Mammary epithelial cell (primary cell): ENCODE measurements at regions of chr18 and their contacts with region 1.

Region 1: GRCh38 chr18:35240664-35241447 is at the start of gene ZNF397:
- DNase-seq: peak; percentile 93
- H3K4me3 ChIP-seq: peak within 1 kb of the TSS; percentile 67 to 94 (median 90)
- H3K27ac ChIP-seq: peak within 1 kb of the TSS; percentile 85
- H3K4me1 ChIP-seq: no peaks in the 10 kb centered on the region
- H3K27me3 ChIP-seq: no peaks in the 10 kb centered on the region
- CTCF ChIP-seq: no peak
- total RNA-seq, gene ZNF397: 13.3 to 15.5 TPM

Region 2: DNA sequence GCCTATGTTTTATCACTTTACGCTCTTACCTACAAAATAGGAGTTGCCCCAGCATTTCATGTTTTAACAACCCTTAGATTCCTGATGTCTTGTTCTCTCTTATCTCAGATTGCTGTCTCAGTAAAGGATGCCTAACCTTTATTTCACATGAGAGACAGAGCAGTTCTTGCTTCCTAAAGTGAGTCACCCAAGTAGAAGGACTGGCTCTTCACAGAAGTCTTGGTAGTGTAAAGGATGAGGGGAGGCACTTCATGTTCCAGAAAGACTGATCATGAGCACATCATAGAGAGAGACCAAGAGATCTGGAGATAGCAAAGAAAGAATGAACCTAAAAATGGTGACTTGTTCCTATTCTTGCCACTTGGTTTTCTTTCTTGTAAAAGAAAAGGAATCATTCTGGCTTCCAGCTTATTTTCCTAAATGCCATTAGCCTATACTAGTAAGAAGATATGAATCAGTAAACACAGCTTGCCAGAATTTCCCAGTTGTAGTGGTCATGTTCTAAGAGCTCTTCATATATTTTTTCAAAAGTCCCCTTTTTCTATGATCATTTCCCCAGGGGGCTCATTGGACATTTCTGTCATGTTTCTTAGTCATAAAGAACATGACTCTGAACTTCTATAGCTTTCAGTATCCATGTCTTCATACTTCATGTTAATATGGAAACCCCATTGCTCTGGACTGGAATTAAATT is 144.7 kb before region 1 on chr18:
- CTCF ChIA-PET with region 1: no interaction called
- dilution Hi-C with region 1: no loop called
- in situ Hi-C with region 1: no loop called
- intact Hi-C with region 1: no loop called
- DNase-seq: peak; percentile 21
- H3K4me3 ChIP-seq: no peak overlapping the region
- H3K27ac ChIP-seq: no peak overlapping the region
- H3K4me1 ChIP-seq: peaks cover 3% of the 10 kb centered on the region
- H3K27me3 ChIP-seq: no peaks in the 10 kb centered on the region
- CTCF ChIP-seq: no peak

Region 3: DNA sequence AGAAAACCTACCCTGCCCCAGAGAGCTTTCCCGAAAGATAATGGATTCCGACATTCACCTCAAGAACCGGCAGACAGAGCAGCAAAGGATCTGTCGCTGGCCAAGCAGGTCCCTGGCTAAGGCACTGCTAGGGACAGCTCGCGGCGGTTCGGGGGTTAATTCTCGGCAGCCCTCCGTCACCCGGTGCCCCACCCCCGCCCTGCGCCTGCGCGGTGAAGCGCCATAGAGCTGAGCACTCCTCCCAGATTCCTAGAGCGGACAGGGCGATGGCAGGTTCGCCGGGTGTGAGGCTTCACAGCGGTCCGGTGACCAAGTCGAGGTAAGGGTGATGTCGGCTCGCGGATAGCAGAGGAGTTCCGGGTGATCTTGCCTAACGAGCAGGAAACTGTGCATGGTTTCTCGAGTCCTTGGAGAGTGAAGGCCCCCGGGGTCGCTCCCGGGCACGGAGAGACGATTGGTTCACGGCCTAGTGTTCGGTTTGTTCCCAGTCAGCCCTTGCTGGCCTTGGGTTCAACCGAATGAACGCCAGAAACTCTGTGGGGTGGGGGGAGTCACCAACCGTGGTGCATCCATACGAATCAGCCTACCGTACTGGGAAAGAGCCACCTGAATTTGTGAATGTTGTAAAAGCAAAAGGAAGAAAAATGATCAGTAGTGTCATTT is 49.3 kb after region 1 on chr18 and contains the start of gene ZSCAN30:
- CTCF ChIA-PET with region 1: no interaction called
- dilution Hi-C with region 1: no loop called
- in situ Hi-C with region 1: no loop called
- intact Hi-C with region 1: loop called (anchors 1 kb)
- DNase-seq: peak; percentile 95
- H3K4me3 ChIP-seq: peak within 1 kb of the TSS; percentile 59 to 92 (median 73)
- H3K27ac ChIP-seq: peak within 1 kb of the TSS; percentile 71
- H3K4me1 ChIP-seq: peaks cover 8% of the 10 kb centered on the region
- H3K27me3 ChIP-seq: no peaks in the 10 kb centered on the region
- CTCF ChIP-seq: no peak
- total RNA-seq, gene ZSCAN30: 15.4 to 17.3 TPM

Region 4: DNA sequence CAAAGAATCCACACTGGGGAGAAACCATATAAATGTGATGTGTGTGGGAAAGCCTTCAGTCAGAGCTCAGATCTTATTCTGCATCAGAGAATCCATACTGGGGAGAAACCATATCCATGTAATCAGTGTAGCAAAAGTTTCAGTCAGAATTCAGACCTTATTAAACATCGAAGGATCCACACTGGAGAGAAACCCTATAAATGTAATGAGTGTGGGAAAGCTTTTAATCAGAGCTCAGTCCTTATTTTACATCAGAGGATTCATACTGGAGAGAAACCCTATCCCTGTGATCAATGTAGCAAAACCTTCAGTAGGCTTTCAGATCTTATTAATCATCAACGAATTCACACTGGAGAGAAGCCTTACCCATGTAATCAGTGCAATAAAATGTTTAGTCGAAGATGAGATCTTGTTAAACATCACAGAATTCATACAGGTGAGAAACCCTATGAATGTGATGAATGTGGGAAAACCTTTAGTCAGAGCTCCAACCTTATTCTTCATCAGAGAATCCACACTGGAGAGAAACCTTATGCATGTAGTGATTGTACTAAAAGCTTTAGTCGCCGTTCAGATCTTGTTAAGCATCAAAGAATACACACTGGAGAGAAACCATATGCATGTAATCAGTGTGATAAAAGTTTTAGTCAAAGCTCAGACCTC is 65.9 kb after region 1 on chr18:
- CTCF ChIA-PET with region 1: no interaction called
- dilution Hi-C with region 1: no loop called
- in situ Hi-C with region 1: loop called in 1 of 2 experiments (anchors 10 kb)
- intact Hi-C with region 1: no loop called
- DNase-seq: no peak
- H3K4me3 ChIP-seq: no peak overlapping the region
- H3K27ac ChIP-seq: no peak overlapping the region
- H3K4me1 ChIP-seq: no peaks in the 10 kb centered on the region
- H3K27me3 ChIP-seq: no peaks in the 10 kb centered on the region
- CTCF ChIP-seq: no peak

Region 5: GRCh38 chr18:35343936-35344735 is 103.3 kb after region 1 on chr18 and contains the start of gene ZNF24:
- CTCF ChIA-PET with region 1: no interaction called
- dilution Hi-C with region 1: no loop called
- in situ Hi-C with region 1: loop called in 1 of 2 experiments (anchors 5 kb)
- intact Hi-C with region 1: loop called (anchors 2 kb)
- DNase-seq: peak; percentile 87
- H3K4me3 ChIP-seq: peak within 1 kb of the TSS; percentile 76 to 92 (median 76)
- H3K27ac ChIP-seq: peak within 1 kb of the TSS; percentile 90
- H3K4me1 ChIP-seq: peaks cover 7% of the 10 kb centered on the region
- H3K27me3 ChIP-seq: no peaks in the 10 kb centered on the region
- CTCF ChIP-seq: no peak
- total RNA-seq, gene ZNF24: 32.8 to 36.3 TPM

Region 6: DNA sequence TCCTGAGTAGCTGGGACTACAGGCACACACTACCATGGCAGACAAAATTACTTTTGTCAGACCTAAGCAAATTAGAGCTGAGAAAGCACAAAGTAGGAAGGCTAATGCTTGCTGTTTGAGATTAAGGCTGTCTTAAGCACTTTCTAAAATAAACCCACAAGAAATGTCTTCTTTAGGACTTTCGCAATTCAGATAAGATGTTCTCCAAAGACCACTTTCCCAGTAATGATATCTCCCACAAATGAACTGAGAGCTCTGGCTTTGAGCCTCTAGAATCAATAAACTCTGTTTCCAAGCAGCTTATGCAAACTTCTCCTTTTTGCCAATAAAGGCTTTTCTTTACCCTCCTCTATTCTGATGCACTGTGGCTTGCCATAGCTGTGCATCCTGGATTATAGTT is 308.7 kb after region 1 on chr18:
- CTCF ChIA-PET with region 1: no interaction called
- dilution Hi-C with region 1: no loop called
- in situ Hi-C with region 1: no loop called
- intact Hi-C with region 1: no loop called
- DNase-seq: no peak
- H3K4me3 ChIP-seq: no peak overlapping the region
- H3K27ac ChIP-seq: no peak overlapping the region
- H3K4me1 ChIP-seq: no peaks in the 10 kb centered on the region
- H3K27me3 ChIP-seq: no peaks in the 10 kb centered on the region
- CTCF ChIP-seq: no peak

Region 7: DNA sequence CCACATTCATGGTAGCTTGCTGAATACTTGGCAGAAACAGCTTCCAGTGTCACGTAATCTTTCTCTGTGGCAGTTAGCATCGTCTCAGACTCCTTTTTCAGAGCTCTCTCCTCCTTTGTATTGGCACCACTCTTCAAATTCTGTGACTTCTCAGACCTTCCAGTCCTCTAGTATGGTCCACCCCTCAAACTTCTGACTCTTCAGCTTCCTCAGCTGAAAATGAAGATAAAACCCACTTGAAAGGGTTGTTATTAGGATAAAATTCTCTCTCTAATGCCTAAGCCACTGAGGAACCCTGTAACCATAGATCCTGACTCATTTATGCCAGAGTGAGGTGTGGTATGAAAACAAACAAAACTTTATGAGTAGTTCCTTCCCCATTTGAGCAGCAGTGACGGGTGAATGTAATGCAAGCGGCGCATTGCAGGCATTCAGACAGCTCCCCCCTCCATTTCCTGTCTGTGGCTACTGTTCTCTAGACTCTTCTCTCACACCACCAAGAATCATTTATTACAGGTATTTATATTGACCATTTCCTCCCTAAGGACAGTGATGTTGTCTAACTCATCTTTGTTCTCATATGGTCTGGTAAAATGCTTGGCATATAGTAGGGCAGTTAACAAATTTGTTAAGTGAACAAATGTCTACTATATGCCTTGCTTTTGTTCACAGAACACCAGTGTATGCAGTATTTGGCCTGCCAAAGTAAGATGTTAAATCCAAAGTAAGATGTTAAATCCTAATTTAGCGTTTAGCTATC is 376.0 kb after region 1 on chr18:
- CTCF ChIA-PET with region 1: no interaction called
- dilution Hi-C with region 1: loop called (anchors 25 kb)
- in situ Hi-C with region 1: no loop called
- intact Hi-C with region 1: no loop called
- DNase-seq: peak; percentile 89
- H3K4me3 ChIP-seq: no peak overlapping the region
- H3K27ac ChIP-seq: peak overlapping the region; percentile 52
- H3K4me1 ChIP-seq: peaks cover 17% of the 10 kb centered on the region
- H3K27me3 ChIP-seq: no peaks in the 10 kb centered on the region
- CTCF ChIP-seq: no peak